CD4-positive, alpha-beta memory T cell (primary cell): ENCODE measurements at regions of chr19 and their contacts with region 1.

Region 1: DNA sequence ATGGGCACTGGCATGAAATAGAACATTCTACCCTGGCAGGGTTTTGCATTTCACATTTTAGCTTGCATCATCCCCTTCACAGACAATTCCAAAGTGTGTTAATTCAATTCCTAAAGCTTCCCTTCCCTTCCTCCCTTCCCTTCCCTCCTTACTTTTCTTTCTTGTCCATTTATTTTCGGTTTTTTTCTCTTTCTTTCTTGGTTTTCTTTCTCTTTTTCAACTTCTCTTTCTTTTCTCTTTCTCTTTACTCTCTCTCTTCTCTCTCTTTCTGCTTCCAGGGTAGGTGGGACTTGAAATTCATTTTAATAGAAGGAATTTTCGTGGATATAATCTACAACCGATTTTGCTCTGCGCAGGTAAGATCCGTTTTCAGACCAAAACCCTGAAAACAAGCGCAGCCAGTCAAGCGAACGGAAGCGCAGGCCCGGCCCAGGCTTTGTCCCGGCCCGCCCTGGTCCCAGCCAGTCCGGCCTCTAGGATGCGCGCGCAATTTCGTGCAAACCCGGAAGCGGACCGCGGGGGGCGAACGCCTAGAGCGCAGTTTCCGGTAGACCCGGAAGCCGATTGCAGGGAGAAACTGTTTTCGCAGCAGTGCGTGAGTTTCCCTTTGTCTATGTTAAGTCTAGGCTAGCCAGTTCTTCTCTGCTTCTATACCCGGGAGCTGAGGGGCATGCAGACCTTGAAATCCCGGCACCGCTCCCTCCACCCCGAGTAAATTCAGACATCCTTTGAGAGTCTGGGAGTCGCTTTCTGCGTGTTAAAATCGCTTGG is at the start of gene ZNF528:
- DNase-seq: peak; percentile 85 to 93 (median 88)
- H3K4me3 ChIP-seq: peak within 1 kb of the TSS; percentile 89 to 98
- H3K4me3 Mint-ChIP-seq: peak within 1 kb of the TSS; percentile 86 to 95 (median 90)
- H3K27ac ChIP-seq: peak within 1 kb of the TSS; percentile 56
- H3K27ac Mint-ChIP-seq: peak within 1 kb of the TSS; percentile 76 to 93 (median 92)
- H3K4me1 ChIP-seq: peaks cover 14% of the 10 kb centered on the region
- H3K4me1 Mint-ChIP-seq: peaks cover 13 to 29% (median 22%) of the 10 kb centered on the region in 4 donors
- H3K27me3 ChIP-seq: no peaks in the 10 kb centered on the region
- H3K27me3 Mint-ChIP-seq: no peaks in the 10 kb centered on the region
- total RNA-seq, gene ZNF528: 44.6 to 49.9 TPM

Region 2: GRCh38 chr19:52369559-52370340 is 27.7 kb before region 1 on chr19 and contains the start of gene ZNF880:
- CTCF ChIA-PET with region 1: interaction called, 4 read pairs
- POLR2A ChIA-PET with region 1: interaction called, 13 read pairs
- intact Hi-C with region 1: loop called (anchors 1 kb)
- DNase-seq: peak; percentile 86 to 89 (median 88)
- H3K4me3 ChIP-seq: peak within 1 kb of the TSS; percentile 94 to 96
- H3K4me3 Mint-ChIP-seq: peak within 1 kb of the TSS; percentile 92 to 96 (median 95)
- H3K27ac ChIP-seq: peak within 1 kb of the TSS; percentile 89
- H3K27ac Mint-ChIP-seq: peak within 1 kb of the TSS; percentile 97 to 99 (median 98)
- H3K4me1 ChIP-seq: peaks cover 10% of the 10 kb centered on the region
- H3K4me1 Mint-ChIP-seq: peaks cover 7 to 14% (median 11%) of the 10 kb centered on the region in 4 donors
- H3K27me3 ChIP-seq: no peaks in the 10 kb centered on the region
- H3K27me3 Mint-ChIP-seq: no peaks in the 10 kb centered on the region
- total RNA-seq, gene ZNF880: 31.2 to 33.5 TPM

Region 3: GRCh38 chr19:52409941-52410675 is 12.6 kb after region 1 on chr19:
- CTCF ChIA-PET with region 1: no interaction called
- POLR2A ChIA-PET with region 1: no interaction called
- intact Hi-C with region 1: no loop called
- DNase-seq: no peak
- H3K4me3 ChIP-seq: no peak overlapping the region
- H3K4me3 Mint-ChIP-seq: no peak overlapping the region
- H3K27ac ChIP-seq: no peak overlapping the region
- H3K27ac Mint-ChIP-seq: no peak overlapping the region
- H3K4me1 ChIP-seq: no peaks in the 10 kb centered on the region
- H3K4me1 Mint-ChIP-seq: no peaks in the 10 kb centered on the region
- H3K27me3 ChIP-seq: no peaks in the 10 kb centered on the region
- H3K27me3 Mint-ChIP-seq: no peaks in the 10 kb centered on the region